Gastrocnemius medialis (tissue), 4 donors: ENCODE measurements at regions of chr7 and their contacts with region 1.

Region 1: GRCh38 chr7:44325811-44326241 is 432 bp upstream of the CAMK2B start:
- DNase-seq: peak in 1 of 2 donors; percentile 61
- ATAC-seq: peak; percentile 16 to 27
- H3K4me3 ChIP-seq: peak overlapping the region; percentile 31 to 53 (median 51)
- H3K27ac ChIP-seq: peak overlapping the region; percentile 54 to 94 (median 64)
- H3K4me1 ChIP-seq: peaks cover 24 to 30% of the 10 kb centered on the region in 2 donors
- H3K27me3 ChIP-seq: no peaks in the 10 kb centered on the region
- CTCF ChIP-seq: peak in 2 of 5 experiments; percentile 31 to 41
- POLR2A ChIP-seq: no peak

Region 2: DNA sequence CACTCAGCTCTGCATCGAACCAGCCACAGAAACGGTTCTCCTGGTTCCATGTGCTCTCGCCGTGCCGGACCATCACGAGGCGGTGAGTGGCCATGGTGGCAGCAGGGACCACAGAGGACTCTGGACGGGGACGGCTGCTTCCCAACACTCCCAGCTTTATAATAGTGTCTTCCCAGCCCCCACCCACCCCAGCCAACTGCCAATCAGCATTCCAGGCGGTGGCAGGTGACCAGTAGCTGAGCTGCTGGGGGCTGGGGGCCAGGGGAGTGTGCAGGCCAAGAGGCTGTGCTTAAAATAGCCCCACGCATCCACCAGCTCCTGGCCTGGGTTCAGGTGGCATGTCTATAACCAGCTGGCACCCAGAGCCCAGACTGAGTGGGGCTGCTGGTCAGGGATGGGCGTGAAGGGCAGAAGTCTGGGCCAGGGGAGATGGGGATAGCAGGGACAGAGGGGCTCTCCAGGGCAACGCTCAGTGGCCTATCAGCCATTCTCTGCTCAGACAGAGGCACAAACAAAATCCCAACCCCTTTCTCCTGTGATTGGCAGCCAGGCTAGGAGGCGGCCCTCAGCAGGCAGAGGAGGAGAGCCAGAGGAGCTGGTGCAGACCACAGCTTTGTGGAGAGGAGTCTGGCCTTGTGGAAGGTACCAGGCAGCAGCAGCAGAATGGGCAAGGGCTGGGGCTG is 260.2 kb before region 1 on chr7 and contains the start of gene PGAM2:
- in situ Hi-C with region 1: no loop called
- intact Hi-C with region 1: loop called (anchors 5 kb)
- DNase-seq: peak; percentile 89 to 96
- ATAC-seq: peak; percentile 65 to 73
- H3K4me3 ChIP-seq: peak within 1 kb of the TSS; percentile 27 to 53 (median 46)
- H3K27ac ChIP-seq: peak within 1 kb of the TSS; percentile 85 to 95 (median 90)
- H3K4me1 ChIP-seq: peaks cover 56 to 70% of the 10 kb centered on the region in 2 donors
- H3K27me3 ChIP-seq: no peaks in the 10 kb centered on the region
- CTCF ChIP-seq: no peak
- POLR2A ChIP-seq: peak; percentile 73 to 75
- total RNA-seq, gene PGAM2: 129 to 355 (median 306) TPM

Region 3: GRCh38 chr7:44082541-44083207 is 243.2 kb before region 1 on chr7:
- in situ Hi-C with region 1: no loop called
- intact Hi-C with region 1: loop called (anchors 5 kb)
- DNase-seq: peak; percentile 99
- ATAC-seq: peak; percentile 89 to 92
- H3K4me3 ChIP-seq: peak overlapping the region; percentile 60 to 98 (median 83)
- H3K27ac ChIP-seq: peak overlapping the region; percentile 90 to 96 (median 94)
- H3K4me1 ChIP-seq: peaks cover 40 to 41% of the 10 kb centered on the region in 2 donors
- H3K27me3 ChIP-seq: no peaks in the 10 kb centered on the region
- CTCF ChIP-seq: no peak
- POLR2A ChIP-seq: peak; percentile 63 to 80

Region 4: DNA sequence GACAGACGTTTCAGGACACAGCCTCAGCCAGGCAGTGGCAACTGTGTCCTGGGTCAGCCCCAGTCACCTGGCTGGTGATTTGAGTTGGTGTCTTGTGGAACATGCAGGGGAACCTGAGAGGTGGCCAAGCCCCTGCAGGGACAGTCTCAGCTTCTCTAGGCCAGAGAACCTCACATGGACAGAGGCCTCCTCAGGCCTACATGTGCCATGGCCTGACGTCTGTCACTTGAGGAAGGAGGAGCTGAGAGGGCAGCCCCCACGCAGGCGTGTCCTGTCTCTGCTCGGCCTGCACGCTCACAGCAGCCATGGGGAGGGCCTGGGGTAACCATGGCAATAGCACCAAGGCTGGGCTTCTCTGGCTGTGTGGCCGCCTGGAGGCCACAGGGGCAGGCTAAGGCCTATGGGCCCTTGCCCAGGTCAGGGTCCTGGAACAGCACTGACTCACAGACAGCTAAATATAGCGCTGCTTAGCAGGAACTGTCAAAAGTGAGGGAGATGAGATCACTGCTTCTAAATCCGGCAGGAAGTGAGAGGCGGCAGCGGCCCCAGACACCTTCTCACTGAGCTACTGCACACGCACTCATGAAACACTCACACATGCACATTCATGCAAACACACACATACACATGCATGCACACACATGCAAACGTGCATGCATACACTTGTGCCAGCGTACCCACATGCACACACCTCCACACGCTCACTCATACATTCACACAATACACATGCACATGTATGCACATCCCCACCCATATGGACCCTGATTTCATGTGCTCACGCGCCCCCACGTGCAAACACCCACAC is 68.0 kb before region 1 on chr7:
- in situ Hi-C with region 1: no loop called
- intact Hi-C with region 1: loop called (anchors 2 kb)
- DNase-seq: peak; percentile 78 to 91
- ATAC-seq: peak; percentile 91
- H3K4me3 ChIP-seq: no peak overlapping the region
- H3K27ac ChIP-seq: peak overlapping the region; percentile 87 to 99 (median 96)
- H3K4me1 ChIP-seq: peaks cover 59 to 61% of the 10 kb centered on the region in 2 donors
- H3K27me3 ChIP-seq: no peaks in the 10 kb centered on the region
- CTCF ChIP-seq: peak in 2 of 5 experiments; percentile 25 to 42
- POLR2A ChIP-seq: peak in 1 of 2 donors; percentile 29

Region 5: DNA sequence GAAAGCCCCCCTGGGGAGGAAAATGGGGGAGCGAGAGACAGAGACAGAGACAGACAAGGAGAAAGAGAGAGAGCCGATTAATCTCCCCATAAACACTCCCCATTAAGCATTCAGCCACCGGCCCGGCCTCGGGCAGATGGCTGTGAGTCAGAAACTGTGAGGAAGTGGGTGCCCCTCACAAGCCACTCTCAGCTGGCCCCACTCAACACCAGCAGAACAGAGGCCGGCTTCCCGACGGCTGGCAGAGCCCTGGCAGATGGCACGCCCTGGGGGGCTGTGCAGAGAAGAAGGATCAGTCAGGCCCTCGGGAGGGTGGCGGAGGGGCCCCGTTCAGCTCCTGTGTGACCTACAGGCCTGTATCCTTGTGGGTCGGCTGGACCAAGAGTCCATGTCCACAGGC is 41.6 kb before region 1 on chr7:
- in situ Hi-C with region 1: no loop called
- intact Hi-C with region 1: loop called (anchors 2 kb)
- DNase-seq: peak; percentile 0 to 12
- ATAC-seq: no peak
- H3K4me3 ChIP-seq: no peak overlapping the region
- H3K27ac ChIP-seq: peak overlapping the region; percentile 91 to 94 (median 92)
- H3K4me1 ChIP-seq: peaks cover 50 to 51% of the 10 kb centered on the region in 2 donors
- H3K27me3 ChIP-seq: no peaks in the 10 kb centered on the region
- CTCF ChIP-seq: no peak
- POLR2A ChIP-seq: no peak

Region 6: DNA sequence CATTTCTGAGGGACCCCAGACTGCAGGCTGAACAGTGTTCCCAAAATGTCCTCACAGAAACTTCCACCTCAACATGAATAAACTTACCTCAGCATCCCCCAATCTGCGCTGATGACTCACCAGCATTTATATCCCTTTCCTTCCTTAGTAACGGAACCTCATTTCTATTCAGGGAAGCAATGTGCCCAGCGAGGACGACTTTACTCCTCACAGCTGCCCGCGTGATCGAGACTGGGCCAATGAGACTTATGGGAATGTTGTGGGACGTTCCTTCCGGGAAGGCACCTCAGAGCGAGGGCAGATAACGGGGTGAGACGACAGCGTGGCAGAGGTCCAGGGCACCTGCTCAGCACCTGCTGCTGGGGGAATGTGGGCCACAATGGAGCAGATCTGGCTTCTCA is 72.7 kb after region 1 on chr7:
- in situ Hi-C with region 1: no loop called
- intact Hi-C with region 1: no loop called
- DNase-seq: peak; percentile 71 to 88
- ATAC-seq: peak; percentile 91 to 94
- H3K4me3 ChIP-seq: peak overlapping the region in 3 of 4 donors; percentile 11 to 45 (median 15)
- H3K27ac ChIP-seq: peak overlapping the region; percentile 82 to 91 (median 86)
- H3K4me1 ChIP-seq: peaks cover 44 to 48% of the 10 kb centered on the region in 2 donors
- H3K27me3 ChIP-seq: no peaks in the 10 kb centered on the region
- CTCF ChIP-seq: no peak
- POLR2A ChIP-seq: peak in 1 of 2 donors; percentile 17

Region 7: DNA sequence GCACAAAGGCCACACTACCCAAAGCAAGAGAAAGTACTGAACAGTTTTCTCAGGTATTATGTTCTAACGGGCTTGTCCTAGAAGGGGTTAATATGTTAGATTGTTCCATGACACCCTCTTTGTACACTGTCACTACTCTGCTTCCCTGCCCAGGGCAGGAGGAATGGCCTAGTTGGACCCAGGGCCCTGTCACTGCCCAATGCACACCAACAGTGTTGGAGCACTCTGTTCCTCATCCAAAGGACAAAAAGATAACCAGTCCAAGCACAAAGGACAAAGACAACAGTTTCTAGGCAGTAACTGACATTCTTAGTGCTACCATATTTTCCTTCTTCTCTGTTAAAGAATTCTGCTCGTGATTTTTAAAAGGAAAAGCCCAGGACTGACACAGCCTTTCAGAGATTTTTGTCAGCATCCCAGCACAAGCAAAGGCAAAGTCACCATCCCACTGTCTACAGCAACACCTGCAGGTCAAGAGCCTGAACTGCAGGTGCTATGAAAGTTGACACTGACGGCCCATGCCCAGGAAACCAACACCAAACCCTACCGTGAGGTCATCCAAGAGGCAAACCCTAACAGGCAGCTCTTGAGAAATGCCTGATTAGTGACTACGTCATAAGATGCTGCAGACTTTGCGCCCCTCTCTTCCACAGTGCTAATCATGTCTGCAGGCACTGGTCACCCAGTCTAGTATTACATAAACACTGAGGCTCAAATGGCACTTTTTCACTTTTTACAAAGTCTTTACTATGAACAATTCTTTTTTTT is 151.4 kb after region 1 on chr7:
- in situ Hi-C with region 1: no loop called
- intact Hi-C with region 1: loop called (anchors 5 kb)
- DNase-seq: peak; percentile 47 to 77
- ATAC-seq: peak; percentile 85 to 99
- H3K4me3 ChIP-seq: no peak overlapping the region
- H3K27ac ChIP-seq: peak overlapping the region in 3 of 4 donors; percentile 6 to 47 (median 38)
- H3K4me1 ChIP-seq: peaks cover 27 to 35% of the 10 kb centered on the region in 2 donors
- H3K27me3 ChIP-seq: no peaks in the 10 kb centered on the region
- CTCF ChIP-seq: peak; percentile 89 to 95 (median 90)
- POLR2A ChIP-seq: no peak

Region 8: GRCh38 chr7:44490351-44491200 is 164.8 kb after region 1 on chr7 and contains the start of gene NUDCD3:
- in situ Hi-C with region 1: no loop called
- intact Hi-C with region 1: loop called (anchors 5 kb)
- DNase-seq: peak; percentile 83
- ATAC-seq: peak; percentile 86 to 91
- H3K4me3 ChIP-seq: peak within 1 kb of the TSS; percentile 76 to 96 (median 88)
- H3K27ac ChIP-seq: peak within 1 kb of the TSS; percentile 90 to 99 (median 96)
- H3K4me1 ChIP-seq: peaks cover 39 to 40% of the 10 kb centered on the region in 2 donors
- H3K27me3 ChIP-seq: no peaks in the 10 kb centered on the region
- CTCF ChIP-seq: peak; percentile 7 to 48 (median 23)
- POLR2A ChIP-seq: peak; percentile 64 to 80
- total RNA-seq, gene NUDCD3: 76.2 to 93.4 (median 77.0) TPM